Activated T-helper 1 cell treated with anti-CD3 and anti-CD28 coated beads, Interleukin-12 subunit alpha, Interleukin-12 subunit beta, Interleukin-2, Interleukin-4 antibody, amounts not matched to agents 30 ng/mL and 10 ng/mL and 1 ng/mL, durations not matched to agents 14 hours and 24 hours and 36 hours (primary cell): ENCODE measurements at regions of chr4 and their contacts with region 1.

Region 1: GRCh38 chr4:121154103-121154515 is 10.0 kb downstream of the TNIP3 start:
- DNase-seq: peak; percentile 39
- H3K4me3 Mint-ChIP-seq: peak overlapping the region; percentile 56
- H3K27ac Mint-ChIP-seq: peak overlapping the region; percentile 73
- H3K4me1 Mint-ChIP-seq: peaks cover 74% of the 10 kb centered on the region
- H3K27me3 Mint-ChIP-seq: peaks cover 9% of the 10 kb centered on the region

Region 2: DNA sequence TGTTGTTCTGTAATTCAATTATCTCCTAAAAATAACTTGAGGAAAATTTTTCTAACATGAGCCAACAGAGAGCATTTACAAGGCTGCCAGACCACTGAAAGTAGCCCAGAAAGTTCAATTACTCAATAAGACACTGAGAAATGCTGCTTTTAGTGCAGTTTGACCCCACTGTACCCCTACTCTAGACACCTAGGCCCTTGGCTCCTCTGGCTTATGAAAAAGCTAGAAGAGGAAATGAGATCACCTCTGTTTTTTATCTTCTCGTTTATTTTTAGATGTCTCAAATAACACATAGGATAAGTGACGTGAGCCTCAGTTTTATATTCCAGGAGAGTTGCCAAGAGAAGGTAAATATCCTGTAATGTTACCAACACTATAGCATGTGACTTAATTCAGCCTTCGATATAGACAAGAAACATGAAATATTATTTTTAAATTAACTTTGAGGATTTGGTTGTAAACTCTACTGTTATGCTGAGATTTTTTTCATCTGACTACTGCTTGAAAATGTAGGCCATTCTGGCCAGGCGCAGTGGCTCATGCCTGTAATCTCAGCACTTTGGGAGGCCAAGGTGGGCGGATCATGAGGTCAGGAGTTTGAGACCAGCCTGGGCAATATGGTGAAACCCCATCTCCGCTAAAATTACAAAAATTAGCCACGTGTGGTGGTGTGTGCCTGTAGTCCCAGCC is 14.4 kb before region 1 on chr4:
- intact Hi-C with region 1: loop called (anchors 1 kb)
- DNase-seq: no peak
- H3K4me3 Mint-ChIP-seq: peak overlapping the region; percentile 31
- H3K27ac Mint-ChIP-seq: peak overlapping the region; percentile 69
- H3K4me1 Mint-ChIP-seq: peaks cover 41% of the 10 kb centered on the region
- H3K27me3 Mint-ChIP-seq: no peaks in the 10 kb centered on the region

Region 3: GRCh38 chr4:121182296-121182695 is 28.2 kb after region 1 on chr4:
- intact Hi-C with region 1: loop called (anchors 1 kb)
- DNase-seq: peak; percentile 34
- H3K4me3 Mint-ChIP-seq: peak overlapping the region; percentile 82
- H3K27ac Mint-ChIP-seq: peak overlapping the region; percentile 93
- H3K4me1 Mint-ChIP-seq: peaks cover 72% of the 10 kb centered on the region
- H3K27me3 Mint-ChIP-seq: peaks cover 2% of the 10 kb centered on the region

Region 4: DNA sequence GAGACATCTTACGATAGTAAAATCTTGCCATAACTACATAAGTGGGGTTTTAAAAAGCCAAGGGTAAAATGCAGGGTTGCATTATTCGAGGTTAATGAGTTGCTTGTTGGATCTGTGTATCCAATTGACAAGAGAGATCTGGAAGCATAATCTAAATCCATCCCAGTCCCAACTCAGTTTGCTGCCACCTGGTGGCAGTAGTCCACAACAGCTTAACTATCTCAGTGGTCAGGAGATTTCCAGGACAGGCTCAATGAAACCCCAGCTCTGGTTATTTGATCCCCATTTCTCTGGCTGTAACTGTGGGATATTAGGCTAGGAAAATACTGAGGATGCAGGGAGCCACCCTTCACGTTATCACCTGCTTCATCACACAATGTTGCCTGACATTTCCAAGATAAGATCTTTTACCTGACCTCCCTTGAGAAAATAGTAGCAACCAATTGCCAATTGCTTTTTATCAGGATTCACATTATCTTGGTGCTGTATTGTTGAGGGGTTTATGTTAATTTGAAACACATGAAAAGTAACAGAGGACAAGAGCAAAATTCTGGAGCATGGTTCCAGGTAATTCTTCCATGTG is 98.2 kb after region 1 on chr4:
- intact Hi-C with region 1: loop called (anchors 1 kb)
- DNase-seq: peak; percentile 21
- H3K4me3 Mint-ChIP-seq: no peak overlapping the region
- H3K27ac Mint-ChIP-seq: no peak overlapping the region
- H3K4me1 Mint-ChIP-seq: peaks cover 66% of the 10 kb centered on the region
- H3K27me3 Mint-ChIP-seq: peaks cover 6% of the 10 kb centered on the region

Region 5: DNA sequence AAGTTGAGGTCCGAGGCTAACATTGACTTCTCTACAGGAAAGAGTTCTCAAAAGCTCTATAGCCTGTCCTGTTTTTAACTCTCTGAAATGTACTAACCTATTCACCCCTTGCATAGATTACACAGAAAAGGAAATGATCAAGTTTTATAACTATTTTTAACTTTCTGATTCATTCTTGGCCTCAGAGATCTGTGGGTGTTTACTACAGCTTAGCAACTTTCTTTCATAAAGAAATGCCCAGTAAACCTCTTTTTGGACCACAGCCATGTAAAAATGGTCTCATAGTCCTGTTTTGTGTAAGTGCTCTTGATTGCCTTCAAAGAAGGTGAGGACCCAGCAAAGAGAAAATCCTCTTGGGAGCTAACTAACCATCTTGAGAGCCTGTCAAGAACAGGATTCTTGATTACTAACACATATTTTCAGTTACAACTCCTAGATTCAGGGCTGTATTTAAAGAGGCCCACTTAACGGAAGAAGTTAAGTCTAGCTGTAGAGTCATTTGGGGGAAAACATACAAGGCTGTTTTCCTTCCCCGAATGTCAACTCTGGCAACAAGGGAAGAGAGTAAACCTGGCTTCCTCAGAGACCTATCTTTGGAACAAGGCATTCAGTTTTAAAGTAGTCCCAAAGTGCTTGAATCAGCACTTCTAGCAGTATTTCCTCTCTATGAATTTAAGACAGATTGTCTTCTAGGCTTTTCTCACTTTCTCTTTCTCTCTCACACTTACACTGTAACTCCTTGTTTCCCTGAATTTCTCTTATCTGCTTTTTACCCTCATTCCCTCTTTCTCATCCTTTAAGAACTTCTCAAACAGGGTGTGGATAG is 1388.5 kb after region 1 on chr4:
- intact Hi-C with region 1: loop called (anchors 5 kb)
- DNase-seq: no peak
- H3K4me3 Mint-ChIP-seq: peak overlapping the region; percentile 71
- H3K27ac Mint-ChIP-seq: peak overlapping the region; percentile 93
- H3K4me1 Mint-ChIP-seq: peaks cover 85% of the 10 kb centered on the region
- H3K27me3 Mint-ChIP-seq: no peaks in the 10 kb centered on the region